ENCODE measurements at regions of chr12 and their contacts with region 1.

Region 1: DNA sequence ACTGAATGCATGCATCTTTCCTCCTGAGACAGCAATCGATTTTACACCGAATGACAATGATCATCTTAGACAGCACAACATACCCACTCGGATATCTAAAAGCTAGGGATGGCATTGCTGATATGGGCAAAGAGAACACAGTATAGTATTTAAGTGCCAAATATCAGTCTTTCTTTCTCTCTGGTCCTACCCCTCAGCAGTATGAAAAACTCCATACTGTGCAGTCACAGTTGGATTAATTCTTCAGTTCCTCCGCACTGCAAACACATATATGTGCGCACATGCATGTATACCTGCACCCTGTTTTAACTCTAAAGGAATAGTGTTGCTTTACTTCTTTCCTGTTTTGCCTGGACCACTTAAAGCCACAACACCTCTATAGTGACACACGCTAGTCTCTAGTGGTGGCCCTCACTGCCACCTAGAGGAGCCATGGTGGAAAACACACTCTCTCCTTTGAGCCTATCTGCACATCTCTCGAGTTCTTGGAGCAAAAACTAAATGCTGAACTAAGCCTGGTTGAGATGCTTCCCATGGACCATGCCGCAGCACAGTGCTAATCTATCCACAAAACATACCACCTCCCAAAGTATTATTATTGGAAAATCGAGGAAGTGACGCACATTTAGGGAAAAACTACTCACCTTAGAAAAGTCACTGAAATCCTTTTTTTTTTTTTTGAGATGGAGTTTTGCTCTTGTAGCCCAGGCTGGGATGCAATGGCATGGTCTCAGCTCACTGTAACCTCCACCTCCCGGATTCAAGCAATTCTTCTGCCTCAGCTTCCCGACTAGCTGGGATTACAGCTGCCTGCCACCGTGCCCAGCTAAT is 11.9 kb downstream of the TMEM52B start:
- DNase-seq: peak in 8 of 9 experiments; percentile 30 to 77 (median 58)
- ATAC-seq: peak; percentile 99
- H3K4me3 ChIP-seq: no peak overlapping the region
- H3K4me3 Mint-ChIP-seq: no peak overlapping the region
- H3K27ac ChIP-seq: no peak overlapping the region
- H3K27ac Mint-ChIP-seq: no peak overlapping the region
- H3K4me1 ChIP-seq: no peaks in the 10 kb centered on the region
- H3K4me1 Mint-ChIP-seq: peaks cover 6% of the 10 kb centered on the region
- H3K27me3 ChIP-seq: peaks cover 0 to 5% of the 10 kb centered on the region in 2 experiments
- H3K27me3 Mint-ChIP-seq: peaks cover 12% of the 10 kb centered on the region
- CTCF ChIP-seq: peak; percentile 83

Region 2: DNA sequence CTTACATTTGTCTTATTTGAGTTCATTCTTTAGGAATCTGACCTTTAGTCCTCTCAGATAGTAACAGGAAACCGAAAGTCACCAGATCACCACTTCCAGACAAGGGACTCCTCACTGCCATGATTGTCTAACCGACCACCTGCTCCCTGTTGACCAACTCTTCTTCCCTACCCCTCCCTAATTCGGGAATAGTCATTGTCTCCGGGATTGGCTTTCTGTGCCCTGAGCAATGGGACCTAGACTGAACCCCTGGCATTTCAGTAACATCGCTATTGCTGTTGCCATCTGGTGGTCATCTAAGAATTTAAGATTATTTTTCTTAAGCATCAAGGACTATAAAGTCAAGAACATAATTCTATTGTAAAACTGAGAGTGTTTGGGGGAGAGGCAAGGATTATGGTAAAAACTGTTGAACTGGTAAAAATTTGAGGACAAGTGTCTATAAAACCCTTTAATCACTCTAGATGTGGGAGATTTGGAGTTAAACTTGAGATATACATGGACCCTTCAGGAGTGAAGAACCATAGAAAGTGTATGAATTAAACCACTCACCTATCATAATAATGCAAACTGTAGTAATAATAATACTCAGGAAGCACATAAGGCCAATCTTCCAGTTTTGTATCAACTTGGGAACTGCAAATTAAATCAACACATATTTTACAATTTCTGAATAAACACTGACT is 264.9 kb before region 1 on chr12:
- CTCF ChIA-PET with region 1: no interaction called
- POLR2A ChIA-PET with region 1: no interaction called
- intact Hi-C with region 1: loop called in 1 of 2 experiments (anchors 5 kb)
- DNase-seq: peak in 6 of 9 experiments; percentile 5 to 74 (median 44)
- ATAC-seq: peak; percentile 59
- H3K4me3 ChIP-seq: peak overlapping the region; percentile 21 to 28
- H3K4me3 Mint-ChIP-seq: peak overlapping the region; percentile 77
- H3K27ac ChIP-seq: no peak overlapping the region
- H3K27ac Mint-ChIP-seq: peak overlapping the region; percentile 18
- H3K4me1 ChIP-seq: no peaks in the 10 kb centered on the region
- H3K4me1 Mint-ChIP-seq: peaks cover 12% of the 10 kb centered on the region
- H3K27me3 ChIP-seq: peaks cover 0 to 2% of the 10 kb centered on the region in 2 experiments
- H3K27me3 Mint-ChIP-seq: no peaks in the 10 kb centered on the region
- CTCF ChIP-seq: peak; percentile 62

Region 3: GRCh38 chr12:11108862-11109261 is 918.1 kb after region 1 on chr12:
- CTCF ChIA-PET with region 1: no interaction called
- POLR2A ChIA-PET with region 1: no interaction called
- intact Hi-C with region 1: no loop called
- DNase-seq: no peak
- ATAC-seq: no peak
- H3K4me3 ChIP-seq: no peak overlapping the region
- H3K4me3 Mint-ChIP-seq: no peak overlapping the region
- H3K27ac ChIP-seq: no peak overlapping the region
- H3K27ac Mint-ChIP-seq: peak overlapping the region; percentile 62
- H3K4me1 ChIP-seq: peaks cover 7% of the 10 kb centered on the region
- H3K4me1 Mint-ChIP-seq: peaks cover 39% of the 10 kb centered on the region
- H3K27me3 ChIP-seq: no peaks in the 10 kb centered on the region
- H3K27me3 Mint-ChIP-seq: no peaks in the 10 kb centered on the region
- CTCF ChIP-seq: no peak